BJ (cell line): ENCODE measurements at regions of chr2 and their contacts with region 1.

Region 1: DNA sequence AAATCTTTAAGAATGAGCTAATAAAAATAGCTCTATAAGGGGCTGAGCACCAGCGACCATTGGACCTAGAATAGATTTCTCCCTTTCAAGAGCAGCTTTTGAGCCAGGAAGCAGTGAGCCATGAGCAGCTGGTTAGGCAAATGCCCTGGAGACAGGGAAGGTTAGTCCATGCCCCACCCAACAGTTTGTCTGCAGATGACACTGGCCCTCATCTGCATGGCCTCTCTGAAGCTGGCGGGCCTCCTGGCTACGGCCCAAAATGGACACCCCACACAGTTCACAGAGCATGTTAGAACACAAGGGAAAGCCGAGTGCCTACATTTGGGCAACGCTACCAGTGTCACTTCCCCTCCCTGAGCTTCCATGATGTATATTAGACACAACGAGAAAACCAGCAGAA is 201.1 kb downstream of the MGAT5 start:
- DNase-seq: no peak
- H3K4me3 ChIP-seq: no peak overlapping the region
- H3K27me3 ChIP-seq: no peaks in the 10 kb centered on the region
- CTCF ChIP-seq: no peak

Region 2: GRCh38 chr2:134441153-134441863 is 13.6 kb before region 1 on chr2:
- CTCF ChIA-PET with region 1: interaction called, 62 read pairs
- POLR2A ChIA-PET with region 1: no interaction called
- DNase-seq: no peak
- H3K4me3 ChIP-seq: no peak overlapping the region
- H3K27me3 ChIP-seq: no peaks in the 10 kb centered on the region
- CTCF ChIP-seq: no peak